Activated CD4-positive, alpha-beta memory T cell treated with anti-CD3 and anti-CD28 coated beads, Interleukin-2, amount 10 ng/mL, durations not matched to agents 7 days and 5 days (primary cell): ENCODE measurements at regions of chr6 and their contacts with region 1.

Region 1: DNA sequence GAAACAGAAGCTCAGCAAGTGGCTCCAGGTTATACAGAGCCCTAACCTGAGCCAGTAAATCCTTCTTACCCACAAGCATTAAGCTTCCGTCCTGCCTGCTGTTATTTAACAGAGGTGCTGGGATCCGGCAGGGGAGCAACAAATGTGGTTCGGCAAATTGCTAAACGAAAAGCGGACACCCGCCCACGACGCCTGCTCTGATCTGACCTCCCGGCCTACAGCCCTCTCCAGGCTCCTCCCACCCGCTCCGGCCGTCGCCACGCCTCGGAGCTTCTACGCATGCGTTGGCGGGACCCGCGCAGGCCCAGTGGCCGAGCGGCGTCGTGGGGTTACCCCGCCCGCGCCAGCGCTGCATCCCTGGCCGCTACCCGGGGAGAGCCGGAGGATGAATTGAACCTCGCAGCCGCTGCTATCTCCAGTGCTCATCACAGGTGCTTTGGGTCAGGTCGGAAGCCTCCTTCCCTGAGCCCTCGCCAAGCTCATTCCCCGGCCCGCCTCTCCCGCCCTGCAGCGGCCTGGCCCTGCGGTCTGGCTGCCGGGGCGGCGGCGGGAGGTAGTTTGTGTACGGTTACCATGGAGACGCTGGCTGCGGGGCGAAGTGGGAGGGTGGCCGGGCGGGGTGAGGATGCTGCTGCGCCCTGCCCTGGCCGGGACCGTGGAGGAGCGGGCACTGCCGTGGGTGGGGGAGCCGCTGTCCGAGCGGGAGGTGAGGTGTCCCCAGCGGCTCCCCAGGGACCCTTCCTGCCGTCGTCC is at the start of gene ARMC2:
- DNase-seq: peak; percentile 89
- H3K4me3 Mint-ChIP-seq: peak within 1 kb of the TSS; percentile 77
- H3K27ac Mint-ChIP-seq: peak within 1 kb of the TSS; percentile 70
- H3K4me1 Mint-ChIP-seq: peaks cover 34% of the 10 kb centered on the region
- H3K27me3 Mint-ChIP-seq: no peaks in the 10 kb centered on the region
- total RNA-seq, gene ARMC2: 12.2 to 13.6 TPM

Region 2: DNA sequence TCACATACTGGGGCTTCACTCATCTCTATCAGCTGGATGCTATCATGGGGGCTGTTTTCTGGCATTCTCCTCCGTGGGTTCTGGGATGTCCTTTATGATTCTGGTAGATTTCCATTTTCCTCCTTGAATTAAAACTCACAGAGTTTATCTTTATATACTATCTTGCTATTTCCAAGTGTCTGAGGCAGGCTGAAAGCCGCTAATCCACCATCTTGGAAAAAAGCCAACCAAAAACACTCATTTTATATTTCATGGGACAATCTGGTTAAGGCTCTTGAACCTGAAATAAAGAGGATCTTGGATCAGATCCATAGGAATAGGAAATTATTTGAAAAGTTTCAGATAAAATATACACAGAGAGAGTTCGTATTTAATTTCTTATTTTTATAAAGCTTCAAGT is 467.4 kb before region 1 on chr6:
- CTCF ChIA-PET with region 1: no interaction called
- POLR2A ChIA-PET with region 1: no interaction called
- DNase-seq: no peak
- H3K4me3 Mint-ChIP-seq: no peak overlapping the region
- H3K27ac Mint-ChIP-seq: no peak overlapping the region
- H3K4me1 Mint-ChIP-seq: no peaks in the 10 kb centered on the region
- H3K27me3 Mint-ChIP-seq: no peaks in the 10 kb centered on the region

Region 3: GRCh38 chr6:108874470-108875160 is 26.3 kb after region 1 on chr6:
- CTCF ChIA-PET with region 1: interaction called, 14 read pairs
- POLR2A ChIA-PET with region 1: interaction called, 8 read pairs
- DNase-seq: peak; percentile 75
- H3K4me3 Mint-ChIP-seq: peak overlapping the region; percentile 75
- H3K27ac Mint-ChIP-seq: peak overlapping the region; percentile 100
- H3K4me1 Mint-ChIP-seq: peaks cover 74% of the 10 kb centered on the region
- H3K27me3 Mint-ChIP-seq: peaks cover 8% of the 10 kb centered on the region

Region 4: DNA sequence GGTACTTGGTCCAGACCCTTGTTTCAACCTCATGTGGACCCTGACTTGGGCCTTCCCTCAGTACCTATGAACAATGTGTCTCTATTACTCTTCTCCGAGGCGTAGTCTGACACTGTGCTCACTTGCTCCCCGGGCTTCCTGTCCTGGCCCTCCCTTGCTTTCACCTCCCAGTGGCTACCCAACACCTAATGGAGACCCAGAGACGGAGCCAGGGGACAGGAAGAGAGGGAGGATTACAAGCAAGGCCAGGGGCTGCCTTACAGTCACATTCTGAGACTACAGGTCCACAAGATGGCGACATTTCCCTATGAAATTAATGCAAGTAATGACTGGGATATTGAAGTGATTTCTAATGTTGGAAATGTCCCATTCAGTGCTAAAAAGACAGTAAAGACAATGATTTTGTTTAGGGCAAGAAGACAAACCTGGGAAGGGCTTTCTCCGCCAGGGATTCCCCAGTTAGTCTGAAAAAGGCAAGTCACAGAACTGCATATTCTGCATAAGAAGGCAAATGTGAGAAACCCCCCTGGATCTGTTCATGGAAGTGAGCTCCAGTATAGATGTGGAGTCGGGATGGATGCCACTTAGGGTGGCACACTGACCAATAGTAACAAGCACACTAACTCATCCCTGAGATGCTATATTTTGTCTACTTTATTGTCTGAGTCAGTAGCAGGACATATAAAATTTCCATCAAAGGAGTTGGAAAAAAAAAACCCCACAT is 678.8 kb after region 1 on chr6:
- CTCF ChIA-PET with region 1: no interaction called
- POLR2A ChIA-PET with region 1: no interaction called
- DNase-seq: peak; percentile 53
- H3K4me3 Mint-ChIP-seq: no peak overlapping the region
- H3K27ac Mint-ChIP-seq: no peak overlapping the region
- H3K4me1 Mint-ChIP-seq: peaks cover 2% of the 10 kb centered on the region
- H3K27me3 Mint-ChIP-seq: no peaks in the 10 kb centered on the region